GM10248 (cell line): ENCODE measurements at regions of chr19 and their contacts with region 1.

Region 1: GRCh38 chr19:6501740-6502648 is at the start of gene TUBB4A:
- DNase-seq: peak; percentile 77
- CTCF ChIP-seq: no peak

Region 2: GRCh38 chr19:6481541-6482342 is 20.3 kb before region 1 on chr19 and contains the start of gene DENND1C:
- CTCF ChIA-PET with region 1: interaction called, 33 read pairs
- POLR2A ChIA-PET with region 1: no interaction called
- DNase-seq: peak; percentile 80
- CTCF ChIP-seq: peak; percentile 88

Region 3: DNA sequence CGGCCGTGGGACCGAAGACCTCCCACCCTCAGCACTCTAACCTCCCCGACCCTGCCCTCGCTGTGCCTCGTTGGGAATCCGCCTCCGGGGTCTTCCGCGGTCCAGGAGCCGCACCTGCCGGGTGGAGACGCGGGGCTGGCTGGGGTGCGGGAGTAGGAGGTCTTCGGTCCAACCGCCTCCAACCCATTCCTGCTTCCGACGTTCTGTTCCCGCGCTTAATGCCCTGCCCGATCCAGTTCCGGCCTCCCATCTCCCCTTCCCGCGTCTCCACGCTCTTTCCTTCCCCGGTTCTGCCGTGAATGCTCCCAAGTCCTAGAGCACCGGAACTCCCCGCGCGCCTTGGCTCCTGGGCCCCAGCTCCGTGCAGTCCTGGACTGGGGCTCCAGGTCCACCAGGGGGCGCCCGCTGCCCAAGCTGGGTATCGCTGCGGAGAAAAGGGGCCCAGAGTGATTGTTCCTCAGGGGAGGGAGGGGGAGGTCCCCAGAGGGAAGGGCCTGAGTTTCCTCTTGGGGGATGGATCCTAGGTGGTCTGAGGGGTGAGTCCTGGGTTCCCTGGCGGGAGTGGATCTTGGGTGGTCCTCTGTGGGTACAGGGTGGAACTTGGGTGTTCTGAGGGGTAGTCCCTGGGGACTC is 14.8 kb after region 1 on chr19:
- CTCF ChIA-PET with region 1: interaction called, 22 read pairs
- POLR2A ChIA-PET with region 1: no interaction called
- DNase-seq: peak; percentile 85
- CTCF ChIP-seq: peak; percentile 98

Region 4: DNA sequence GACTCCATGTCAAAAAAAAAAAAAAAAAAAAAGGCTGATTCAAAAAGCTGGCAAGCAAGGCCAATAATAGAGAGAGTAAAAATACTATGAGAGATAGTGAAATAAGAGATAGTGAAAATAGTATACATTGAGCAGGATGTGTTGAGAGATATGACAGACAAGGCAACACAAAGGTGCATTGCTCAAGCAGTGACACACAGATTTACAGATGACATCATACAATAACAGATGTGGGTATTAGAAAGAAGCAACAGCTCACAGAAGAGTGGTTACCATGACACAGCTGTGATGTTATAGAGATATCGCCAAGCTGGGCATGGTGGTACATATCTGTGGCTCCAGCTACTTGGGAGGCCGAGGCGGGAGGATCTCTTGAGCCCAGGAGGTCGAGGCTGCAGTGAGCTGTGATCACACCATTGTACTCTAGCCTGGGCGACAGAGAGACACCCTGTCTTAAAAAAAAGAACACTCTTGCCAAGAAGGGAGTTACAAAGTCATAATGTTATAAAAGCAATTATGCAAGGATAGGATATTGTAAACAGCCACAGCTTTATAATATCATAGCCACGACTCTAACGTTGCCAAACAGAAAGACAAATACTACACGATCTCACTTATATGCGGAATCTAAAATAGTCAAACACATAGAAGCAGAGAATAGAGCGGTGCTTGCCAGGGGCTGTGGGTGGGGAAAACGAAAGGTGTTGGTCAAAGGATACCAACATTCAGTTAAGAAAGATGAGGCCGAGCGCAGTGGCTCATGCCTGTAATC is 39.1 kb after region 1 on chr19:
- CTCF ChIA-PET with region 1: no interaction called
- POLR2A ChIA-PET with region 1: no interaction called
- DNase-seq: no peak
- CTCF ChIP-seq: no peak